ENCODE measurements at regions of chr11 and their contacts with region 1.

Region 1: DNA sequence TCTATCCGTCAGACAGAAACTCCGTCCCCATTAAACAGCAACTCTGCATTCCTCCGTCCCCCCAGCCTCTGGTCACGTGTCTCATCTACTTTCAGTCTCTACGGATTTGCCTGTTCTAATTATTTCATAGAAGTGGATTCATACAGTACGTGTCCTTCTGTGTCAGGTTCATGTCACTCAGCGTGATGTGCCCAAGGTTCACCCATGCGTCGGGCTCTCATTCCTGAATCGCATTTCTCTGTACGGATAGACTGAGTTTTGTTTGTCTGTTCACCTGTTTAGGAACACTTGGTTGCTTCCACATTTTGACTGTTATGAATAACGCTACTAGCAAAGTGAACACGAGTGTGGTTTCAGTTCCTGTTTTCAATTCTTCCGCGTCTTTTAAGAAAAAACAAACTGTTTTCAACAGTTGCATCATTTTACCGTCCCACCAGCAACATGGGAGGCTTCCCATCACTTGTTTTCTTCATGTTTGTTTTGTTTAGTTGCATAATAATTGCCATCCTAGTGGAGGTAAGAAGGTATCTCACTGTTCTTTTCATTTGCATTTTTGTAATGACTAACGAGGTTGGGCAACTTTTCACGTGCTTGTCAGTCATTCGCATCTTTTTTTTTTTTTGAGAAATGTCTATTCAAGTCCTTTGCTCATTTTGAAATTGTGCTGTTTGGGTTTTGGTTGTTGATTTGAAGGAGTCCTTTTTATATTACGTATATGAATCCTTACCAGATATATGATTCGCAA is 8.9 kb upstream of the NLRP6 start:
- DNase-seq: peak; percentile 81
- H3K4me3 Mint-ChIP-seq: peak overlapping the region; percentile 86
- H3K27ac Mint-ChIP-seq: peak overlapping the region; percentile 96
- H3K4me1 Mint-ChIP-seq: peaks cover 36% of the 10 kb centered on the region
- H3K27me3 Mint-ChIP-seq: no peaks in the 10 kb centered on the region

Region 2: DNA sequence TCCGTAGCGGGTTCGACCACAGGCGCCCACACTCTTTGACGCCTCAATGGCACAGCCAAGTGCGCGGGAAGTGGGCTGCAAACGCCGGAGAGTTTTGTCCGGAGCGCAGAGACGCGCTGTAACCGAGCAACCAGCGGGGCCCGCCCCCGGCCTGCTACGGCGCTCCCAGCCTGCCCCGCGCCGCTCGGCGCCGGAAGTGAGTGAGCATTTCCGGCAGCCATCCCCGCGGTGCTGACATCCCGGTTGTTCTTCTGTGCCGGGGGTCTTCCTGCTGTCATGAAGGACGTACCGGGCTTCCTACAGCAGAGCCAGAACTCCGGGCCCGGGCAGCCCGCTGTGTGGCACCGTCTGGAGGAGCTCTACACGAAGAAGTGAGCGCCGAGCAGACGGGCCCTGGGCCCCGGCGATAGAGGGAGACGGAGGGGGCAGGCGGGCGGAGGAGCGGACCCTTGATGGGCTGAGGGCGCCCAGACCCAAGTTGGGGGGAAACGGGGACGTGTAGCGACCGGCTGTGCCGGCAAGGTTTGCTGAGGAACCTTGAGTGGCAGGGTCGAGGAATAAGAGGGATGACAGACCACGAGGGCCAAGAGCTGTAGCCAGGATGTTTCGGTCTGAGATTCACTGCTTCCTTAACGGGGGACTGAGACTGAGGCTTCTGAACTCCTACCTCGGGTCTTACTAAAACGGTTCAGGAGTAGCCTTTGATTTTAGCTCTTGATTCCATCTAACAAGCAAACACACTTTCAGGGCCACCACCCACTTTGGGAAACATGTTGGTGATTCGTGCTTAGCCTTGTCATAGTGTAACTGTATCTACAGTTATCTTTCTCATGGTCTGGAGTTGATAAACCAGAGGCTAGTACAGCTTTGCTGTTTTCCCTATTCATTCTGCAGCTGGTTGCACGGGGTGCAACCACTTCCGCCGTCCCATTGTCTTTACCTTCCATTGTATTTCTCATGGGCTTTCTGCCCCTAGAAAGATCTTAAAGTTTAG is 32.2 kb before region 1 on chr11 and contains the start of gene PSMD13:
- CTCF ChIA-PET with region 1: interaction called, 7 read pairs
- POLR2A ChIA-PET with region 1: interaction called, 6 read pairs
- intact Hi-C with region 1: loop called (anchors 1 kb)
- DNase-seq: peak; percentile 93
- H3K4me3 Mint-ChIP-seq: peak within 1 kb of the TSS; percentile 97
- H3K27ac Mint-ChIP-seq: peak within 1 kb of the TSS; percentile 94
- H3K4me1 Mint-ChIP-seq: peaks cover 49% of the 10 kb centered on the region
- H3K27me3 Mint-ChIP-seq: no peaks in the 10 kb centered on the region
- total RNA-seq, gene PSMD13: 210 to 214 TPM

Region 3: GRCh38 chr11:279966-280582 is 10.8 kb after region 1 on chr11:
- CTCF ChIA-PET with region 1: interaction called, 4 read pairs
- POLR2A ChIA-PET with region 1: interaction called, 3 read pairs
- intact Hi-C with region 1: loop called (anchors 1 kb)
- DNase-seq: peak; percentile 62
- H3K4me3 Mint-ChIP-seq: peak overlapping the region; percentile 68
- H3K27ac Mint-ChIP-seq: peak overlapping the region; percentile 54
- H3K4me1 Mint-ChIP-seq: peaks cover 50% of the 10 kb centered on the region
- H3K27me3 Mint-ChIP-seq: peaks cover 18% of the 10 kb centered on the region

Region 4: GRCh38 chr11:313787-314547 is 44.6 kb after region 1 on chr11 and contains the start of gene IFITM1:
- CTCF ChIA-PET with region 1: interaction called, 4 read pairs
- POLR2A ChIA-PET with region 1: interaction called, 3 read pairs
- intact Hi-C with region 1: loop called (anchors 1 kb)
- DNase-seq: peak; percentile 80
- H3K4me3 Mint-ChIP-seq: peak within 1 kb of the TSS; percentile 97
- H3K27ac Mint-ChIP-seq: peak within 1 kb of the TSS; percentile 100
- H3K4me1 Mint-ChIP-seq: peaks cover 36% of the 10 kb centered on the region
- H3K27me3 Mint-ChIP-seq: no peaks in the 10 kb centered on the region
- total RNA-seq, gene IFITM1: 195 to 200 TPM

Region 5: DNA sequence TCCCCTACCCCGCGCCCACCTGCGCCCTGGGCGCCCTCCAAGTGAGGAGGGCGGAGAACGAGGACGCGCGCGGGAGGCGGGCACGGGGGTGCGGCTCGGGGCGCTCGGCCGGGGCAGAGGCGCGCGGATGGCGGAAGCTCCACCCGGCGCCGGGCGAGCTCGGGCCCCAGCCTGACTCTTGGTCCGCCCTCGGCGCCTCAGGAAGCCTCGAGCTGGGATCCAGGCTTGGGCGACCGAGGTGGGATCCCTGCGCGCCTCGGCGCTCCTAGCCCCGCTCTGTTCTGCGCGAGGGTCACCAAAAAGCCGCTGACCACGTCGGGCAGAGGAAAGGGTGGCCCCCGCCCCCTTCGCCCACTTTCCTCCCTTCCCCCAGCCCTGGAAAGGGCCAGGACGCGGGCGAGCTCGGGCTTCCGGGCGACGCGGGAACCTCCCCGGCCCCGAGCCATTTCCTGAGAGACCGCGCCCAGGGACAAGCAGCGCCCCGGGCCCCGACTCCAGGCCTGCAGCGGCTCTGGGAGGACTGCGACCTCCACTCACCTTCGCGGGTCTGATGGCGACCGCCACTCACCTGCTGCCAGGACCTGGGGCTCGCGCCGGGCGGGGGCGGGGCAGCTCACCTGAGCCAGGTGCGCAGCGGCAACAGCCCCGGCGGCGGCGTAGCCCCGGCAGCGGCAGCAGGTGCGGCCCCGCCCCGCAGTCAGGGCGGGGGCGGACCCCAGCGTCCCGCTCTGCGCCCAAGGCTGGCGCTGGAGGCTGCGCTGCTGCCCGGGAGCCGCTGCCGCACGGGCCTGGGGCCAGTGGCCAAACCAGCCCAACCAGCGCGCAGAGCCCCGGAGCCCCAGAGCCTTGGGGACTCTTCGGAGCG is 147.7 kb after region 1 on chr11:
- CTCF ChIA-PET with region 1: interaction called, 3 read pairs
- POLR2A ChIA-PET with region 1: no interaction called
- intact Hi-C with region 1: loop called (anchors 2 kb)
- DNase-seq: peak; percentile 57
- H3K4me3 Mint-ChIP-seq: peak overlapping the region; percentile 83
- H3K27ac Mint-ChIP-seq: no peak overlapping the region
- H3K4me1 Mint-ChIP-seq: peaks cover 25% of the 10 kb centered on the region
- H3K27me3 Mint-ChIP-seq: no peaks in the 10 kb centered on the region